PC-9 (cell line): ENCODE measurements at regions of chr5 and their contacts with region 1.

Region 1: DNA sequence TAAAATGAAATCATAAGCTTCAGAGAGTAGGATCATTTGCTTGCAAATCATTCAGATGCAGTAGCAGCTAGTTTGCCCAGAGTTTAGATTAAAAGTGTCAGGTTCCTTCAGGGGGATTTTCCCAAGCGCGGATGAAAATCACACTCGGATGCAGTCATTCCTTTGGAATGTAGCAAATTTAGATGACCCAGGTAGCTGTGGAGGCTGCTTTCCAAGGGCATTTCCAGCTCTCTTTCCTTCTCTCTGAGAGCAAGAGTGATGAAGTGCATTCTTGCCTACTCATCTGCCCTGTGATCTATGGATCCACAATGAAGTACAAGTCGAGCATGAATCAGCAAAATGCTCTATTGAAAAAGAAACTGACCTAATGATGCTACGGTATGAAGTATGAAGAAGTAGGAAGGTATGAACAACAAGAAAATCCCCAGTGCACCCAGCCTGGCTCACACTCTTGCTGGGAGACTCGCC is 200.2 kb downstream of the PLK2 start:
- DNase-seq: peak; percentile 85 to 100
- H3K4me3 ChIP-seq: peak overlapping the region; percentile 44; the same call in 1 of the 2 replicates
- H3K27ac ChIP-seq: peak overlapping the region; percentile 98
- H3K4me1 ChIP-seq: peaks cover 42% of the 10 kb centered on the region
- H3K27me3 ChIP-seq: no peaks in the 10 kb centered on the region
- CTCF ChIP-seq: no peak

Region 2: GRCh38 chr5:57422993-57423392 is 836.7 kb before region 1 on chr5:
- CTCF ChIA-PET with region 1: no interaction called
- POLR2A ChIA-PET with region 1: no interaction called
- intact Hi-C with region 1: no loop called
- DNase-seq: no peak
- H3K4me3 ChIP-seq: no peak overlapping the region
- H3K27ac ChIP-seq: no peak overlapping the region
- H3K4me1 ChIP-seq: no peaks in the 10 kb centered on the region
- H3K27me3 ChIP-seq: no peaks in the 10 kb centered on the region
- CTCF ChIP-seq: no peak

Region 3: GRCh38 chr5:57779383-57780223 is 480.1 kb before region 1 on chr5:
- CTCF ChIA-PET with region 1: no interaction called
- POLR2A ChIA-PET with region 1: no interaction called
- intact Hi-C with region 1: loop called (anchors 1 kb)
- DNase-seq: peak; percentile 59 to 73
- H3K4me3 ChIP-seq: no peak overlapping the region
- H3K27ac ChIP-seq: peak overlapping the region; percentile 55
- H3K4me1 ChIP-seq: peaks cover 29% of the 10 kb centered on the region
- H3K27me3 ChIP-seq: no peaks in the 10 kb centered on the region
- CTCF ChIP-seq: peak; percentile 77

Region 4: GRCh38 chr5:57841676-57842363 is 417.9 kb before region 1 on chr5:
- CTCF ChIA-PET with region 1: no interaction called
- POLR2A ChIA-PET with region 1: interaction called, 5 read pairs
- intact Hi-C with region 1: loop called (anchors 1 kb)
- DNase-seq: peak; percentile 79 to 98
- H3K4me3 ChIP-seq: peak overlapping the region; percentile 24; the same call in 1 of the 2 replicates
- H3K27ac ChIP-seq: peak overlapping the region; percentile 98
- H3K4me1 ChIP-seq: peaks cover 66% of the 10 kb centered on the region
- H3K27me3 ChIP-seq: no peaks in the 10 kb centered on the region
- CTCF ChIP-seq: 0 out of 2 replicates have a peak, but pooled peaks have one; percentile 16

Region 5: GRCh38 chr5:58019614-58020013 is 240.1 kb before region 1 on chr5:
- CTCF ChIA-PET with region 1: interaction called, 3 read pairs
- POLR2A ChIA-PET with region 1: no interaction called
- intact Hi-C with region 1: loop called (anchors 10 kb)
- DNase-seq: no peak
- H3K4me3 ChIP-seq: no peak overlapping the region
- H3K27ac ChIP-seq: no peak overlapping the region
- H3K4me1 ChIP-seq: peaks cover 46% of the 10 kb centered on the region
- H3K27me3 ChIP-seq: no peaks in the 10 kb centered on the region
- CTCF ChIP-seq: no peak

Region 6: DNA sequence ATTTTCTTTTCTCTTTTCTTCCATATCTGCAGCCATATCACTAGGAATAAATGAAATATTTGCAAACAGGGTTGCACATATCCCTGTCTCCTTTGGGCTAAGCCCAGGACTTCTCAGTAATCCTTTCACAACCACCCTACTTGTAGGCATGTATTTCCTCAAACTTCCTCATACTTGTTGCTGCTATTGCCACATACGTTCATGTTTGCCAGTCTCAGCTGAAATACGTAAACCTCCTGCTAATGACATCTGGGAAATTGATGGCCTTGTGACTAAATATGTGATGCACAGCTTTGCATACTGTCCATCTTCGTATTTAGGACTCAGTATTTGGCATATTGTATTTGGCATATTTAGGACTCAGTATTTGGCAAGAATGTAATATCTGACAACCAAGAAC is 24.4 kb before region 1 on chr5:
- CTCF ChIA-PET with region 1: interaction called, 3 read pairs
- POLR2A ChIA-PET with region 1: interaction called, 9 read pairs
- intact Hi-C with region 1: loop called (anchors 1 kb)
- DNase-seq: peak; percentile 27 to 90
- H3K4me3 ChIP-seq: no peak overlapping the region
- H3K27ac ChIP-seq: peak overlapping the region; percentile 52
- H3K4me1 ChIP-seq: peaks cover 43% of the 10 kb centered on the region
- H3K27me3 ChIP-seq: no peaks in the 10 kb centered on the region
- CTCF ChIP-seq: no peak

Region 7: DNA sequence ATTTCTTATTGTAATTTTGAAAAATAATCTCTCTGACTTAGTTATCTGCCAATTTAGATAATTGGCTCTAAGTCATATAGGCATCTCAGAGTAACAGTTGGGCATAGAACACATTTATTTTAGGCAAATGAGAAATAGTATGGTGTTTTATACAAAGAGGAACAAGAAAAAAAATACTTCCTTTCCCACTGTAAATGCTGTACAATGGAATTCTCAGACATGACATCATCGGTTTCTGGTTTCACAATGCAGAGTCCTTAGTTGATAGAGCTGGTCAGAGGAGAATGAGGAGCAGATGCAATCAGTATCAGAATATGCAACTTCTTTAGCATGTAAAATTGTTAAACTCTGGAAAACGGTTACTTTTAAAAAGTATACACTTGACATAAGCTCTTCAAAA is 150.7 kb after region 1 on chr5:
- CTCF ChIA-PET with region 1: no interaction called
- POLR2A ChIA-PET with region 1: interaction called, 11 read pairs
- intact Hi-C with region 1: loop called (anchors 1 kb)
- DNase-seq: peak; percentile 18 to 81
- H3K4me3 ChIP-seq: no peak overlapping the region
- H3K27ac ChIP-seq: peak overlapping the region; percentile 87
- H3K4me1 ChIP-seq: peaks cover 59% of the 10 kb centered on the region
- H3K27me3 ChIP-seq: no peaks in the 10 kb centered on the region
- CTCF ChIP-seq: no peak

Region 8: DNA sequence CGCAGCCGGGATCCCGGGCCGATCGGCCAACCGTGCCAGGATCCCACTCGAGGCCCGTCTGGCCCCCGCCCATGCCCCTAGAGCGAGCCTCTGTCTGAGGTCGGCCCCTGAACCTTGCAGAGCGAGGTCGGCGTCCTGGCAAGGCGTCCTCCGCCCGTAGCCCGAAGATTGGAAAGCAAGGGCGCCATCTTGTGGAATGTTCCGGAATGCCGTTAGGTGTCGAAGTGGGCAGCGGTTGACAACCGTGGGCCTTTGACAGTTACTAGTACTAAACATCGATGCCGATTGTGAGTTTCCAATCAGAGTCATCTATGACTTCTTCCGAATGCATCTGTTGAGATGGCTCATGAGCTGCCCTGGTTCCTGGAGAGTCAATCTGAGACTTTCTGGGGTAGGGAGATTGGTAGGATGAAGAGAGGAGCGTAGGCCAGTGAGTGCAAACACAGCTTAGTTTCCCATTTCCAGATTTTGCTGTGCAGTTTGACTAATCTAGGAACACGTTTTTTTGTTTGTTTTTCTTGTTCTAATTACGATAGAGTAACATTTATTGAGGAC is 201.1 kb after region 1 on chr5:
- CTCF ChIA-PET with region 1: interaction called, 3 read pairs
- POLR2A ChIA-PET with region 1: interaction called, 9 read pairs
- intact Hi-C with region 1: loop called (anchors 1 kb)
- DNase-seq: peak; percentile 79 to 91
- H3K4me3 ChIP-seq: peak overlapping the region; percentile 90
- H3K27ac ChIP-seq: peak overlapping the region; percentile 96
- H3K4me1 ChIP-seq: peaks cover 14% of the 10 kb centered on the region
- H3K27me3 ChIP-seq: no peaks in the 10 kb centered on the region
- CTCF ChIP-seq: peak; percentile 83